Naive thymus-derived CD4-positive, alpha-beta T cell (primary cell): ENCODE measurements at regions of chr16 and their contacts with region 1.

Region 1: GRCh38 chr16:30957456-30958174 is at the start of gene SETD1A:
- DNase-seq: peak; percentile 94 to 99 (median 97)
- ATAC-seq: peak; percentile 93
- H3K4me3 ChIP-seq: peak within 1 kb of the TSS; percentile 100
- H3K4me3 Mint-ChIP-seq: peak within 1 kb of the TSS; percentile 81 to 97 (median 96)
- H3K27ac ChIP-seq: peak within 1 kb of the TSS; percentile 93
- H3K27ac Mint-ChIP-seq: peak within 1 kb of the TSS; percentile 97 to 100 (median 98)
- H3K4me1 ChIP-seq: peaks cover 16 to 22% of the 10 kb centered on the region in 2 donors
- H3K4me1 Mint-ChIP-seq: peaks cover 23 to 46% (median 29%) of the 10 kb centered on the region in 7 donors
- H3K27me3 ChIP-seq: no peaks in the 10 kb centered on the region
- H3K27me3 Mint-ChIP-seq: peaks cover 0 to 3% (median 0%) of the 10 kb centered on the region in 5 donors
- total RNA-seq, gene SETD1A: 27.0 to 47.2 (median 36.8) TPM

Region 2: GRCh38 chr16:30571695-30572600 is 385.7 kb before region 1 on chr16 and contains the start of gene ZNF688:
- CTCF ChIA-PET with region 1: no interaction called
- POLR2A ChIA-PET with region 1: no interaction called
- intact Hi-C with region 1: loop called in 1 of 2 experiments (anchors 1 kb)
- DNase-seq: peak; percentile 74 to 99 (median 97)
- ATAC-seq: peak; percentile 89
- H3K4me3 ChIP-seq: peak within 1 kb of the TSS; percentile 88
- H3K4me3 Mint-ChIP-seq: peak within 1 kb of the TSS; percentile 87 to 98 (median 90)
- H3K27ac ChIP-seq: peak within 1 kb of the TSS; percentile 94
- H3K27ac Mint-ChIP-seq: peak within 1 kb of the TSS; percentile 92 to 98 (median 95)
- H3K4me1 ChIP-seq: peaks cover 36 to 38% of the 10 kb centered on the region in 2 donors
- H3K4me1 Mint-ChIP-seq: peaks cover 17 to 51% (median 39%) of the 10 kb centered on the region in 7 donors
- H3K27me3 ChIP-seq: no peaks in the 10 kb centered on the region
- H3K27me3 Mint-ChIP-seq: no peaks in the 10 kb centered on the region
- total RNA-seq, gene ZNF688: 8.8 to 24.3 (median 16.3) TPM

Region 3: DNA sequence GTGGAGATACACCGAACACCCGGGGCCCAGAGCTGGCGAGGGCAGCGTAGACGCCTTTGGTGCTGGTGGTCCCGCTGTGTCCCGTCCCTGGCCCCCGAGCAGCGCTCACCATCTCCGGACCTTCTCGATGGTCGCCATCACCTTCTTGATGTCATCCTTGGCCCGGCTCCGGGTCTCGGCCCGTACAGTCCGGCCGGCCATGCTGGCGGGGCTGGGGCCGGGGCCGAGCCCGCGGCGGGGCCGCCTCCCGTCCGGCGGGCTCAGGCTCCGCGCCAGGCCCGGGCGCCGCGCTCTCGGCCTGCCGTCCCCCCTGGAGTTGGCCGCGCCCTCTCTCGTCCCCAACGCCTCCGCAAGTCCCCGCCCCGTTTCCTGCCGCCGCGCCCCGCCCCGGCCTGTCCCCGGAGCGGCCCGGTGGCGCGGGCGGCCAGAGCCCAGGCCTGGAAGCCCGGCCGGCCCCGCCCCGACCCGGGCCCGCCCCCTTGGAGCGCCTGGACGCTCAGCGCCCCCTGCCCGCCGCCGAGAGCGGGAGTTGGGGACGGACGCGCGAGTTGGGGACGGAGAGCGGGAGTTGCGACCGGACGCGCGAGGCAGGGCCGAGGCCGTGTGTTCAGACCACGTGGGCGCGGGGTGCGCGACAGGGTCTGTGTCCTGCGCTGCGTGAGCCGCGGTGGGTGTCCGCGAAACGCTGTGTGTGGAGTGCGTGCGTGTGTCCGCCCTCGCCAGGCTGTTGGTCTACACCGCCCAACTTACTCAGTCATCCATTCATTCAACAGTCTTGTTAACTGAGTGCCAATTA is 63.7 kb before region 1 on chr16 and contains the start of gene BCL7C:
- CTCF ChIA-PET with region 1: no interaction called
- POLR2A ChIA-PET with region 1: no interaction called
- intact Hi-C with region 1: loop called in 1 of 2 experiments (anchors 2 kb)
- DNase-seq: peak; percentile 48 to 96 (median 61)
- ATAC-seq: peak; percentile 85
- H3K4me3 ChIP-seq: peak within 1 kb of the TSS; percentile 82
- H3K4me3 Mint-ChIP-seq: peak within 1 kb of the TSS; percentile 84 to 96 (median 90)
- H3K27ac ChIP-seq: peak within 1 kb of the TSS; percentile 82
- H3K27ac Mint-ChIP-seq: peak within 1 kb of the TSS; percentile 80 to 94 (median 91)
- H3K4me1 ChIP-seq: peaks cover 25 to 34% of the 10 kb centered on the region in 2 donors
- H3K4me1 Mint-ChIP-seq: peaks cover 26 to 60% (median 48%) of the 10 kb centered on the region in 7 donors
- H3K27me3 ChIP-seq: no peaks in the 10 kb centered on the region
- H3K27me3 Mint-ChIP-seq: no peaks in the 10 kb centered on the region
- total RNA-seq, gene BCL7C: 17.2 to 23.7 (median 22.7) TPM

Region 4: DNA sequence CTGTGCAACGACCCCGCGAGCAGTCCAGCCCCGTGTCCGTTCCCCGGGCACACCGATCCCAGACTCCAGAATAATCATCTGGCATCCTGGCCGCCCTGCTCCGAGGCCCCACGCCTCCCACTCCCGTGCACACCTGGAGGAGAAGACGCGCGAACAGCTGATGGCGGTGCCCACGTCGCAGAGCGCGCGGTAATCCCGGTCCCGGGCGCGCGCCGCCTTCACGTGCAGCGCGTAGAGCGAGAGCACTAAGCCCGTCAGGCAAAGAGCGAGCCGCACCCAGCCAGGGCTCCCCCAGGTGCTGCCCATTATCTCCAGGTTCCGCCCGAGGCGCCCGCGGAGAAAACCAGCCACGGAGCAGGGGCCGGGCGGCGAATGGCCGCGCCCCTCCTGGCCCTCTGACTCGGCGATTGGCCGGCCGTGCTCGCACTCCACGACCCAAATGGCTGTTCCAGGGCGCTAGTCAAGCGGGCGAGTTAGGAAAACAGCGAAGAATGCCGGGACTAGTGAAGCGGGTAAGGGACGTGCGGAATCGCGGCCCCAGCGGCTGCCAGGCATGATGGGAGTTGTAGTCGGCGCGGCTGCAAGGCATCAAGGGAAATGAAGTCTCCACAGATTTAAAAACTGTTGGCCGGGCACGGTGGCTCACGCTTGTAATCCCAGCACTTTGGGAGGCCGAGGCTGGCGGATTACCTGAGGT is 137.0 kb after region 1 on chr16 and contains the start of gene VKORC1:
- CTCF ChIA-PET with region 1: no interaction called
- POLR2A ChIA-PET with region 1: interaction called, 3 read pairs
- intact Hi-C with region 1: loop called in 1 of 2 experiments (anchors 1 kb)
- DNase-seq: peak; percentile 66 to 89 (median 88)
- ATAC-seq: peak; percentile 93
- H3K4me3 ChIP-seq: peak within 1 kb of the TSS; percentile 99
- H3K4me3 Mint-ChIP-seq: peak within 1 kb of the TSS; percentile 92 to 99 (median 94)
- H3K27ac ChIP-seq: peak within 1 kb of the TSS; percentile 85
- H3K27ac Mint-ChIP-seq: peak within 1 kb of the TSS; percentile 67 to 95 (median 91)
- H3K4me1 ChIP-seq: peaks cover 14 to 18% of the 10 kb centered on the region in 2 donors
- H3K4me1 Mint-ChIP-seq: peaks cover 14 to 42% (median 29%) of the 10 kb centered on the region in 7 donors
- H3K27me3 ChIP-seq: no peaks in the 10 kb centered on the region
- H3K27me3 Mint-ChIP-seq: no peaks in the 10 kb centered on the region
- total RNA-seq, gene VKORC1: 29.5 to 69.3 (median 35.6) TPM

Region 5: GRCh38 chr16:31179747-31180459 is 222.3 kb after region 1 on chr16 and contains the start of gene FUS:
- CTCF ChIA-PET with region 1: no interaction called
- POLR2A ChIA-PET with region 1: interaction called, 3 read pairs
- intact Hi-C with region 1: loop called in 1 of 2 experiments (anchors 1 kb)
- DNase-seq: peak; percentile 88 to 97 (median 95)
- ATAC-seq: peak; percentile 87
- H3K4me3 ChIP-seq: peak within 1 kb of the TSS; percentile 76
- H3K4me3 Mint-ChIP-seq: peak within 1 kb of the TSS; percentile 92 to 99 (median 96)
- H3K27ac ChIP-seq: peak within 1 kb of the TSS; percentile 90
- H3K27ac Mint-ChIP-seq: peak within 1 kb of the TSS; percentile 96 to 100 (median 99)
- H3K4me1 ChIP-seq: peaks cover 56% of the 10 kb centered on the region in 2 donors
- H3K4me1 Mint-ChIP-seq: peaks cover 49 to 72% (median 56%) of the 10 kb centered on the region in 7 donors
- H3K27me3 ChIP-seq: no peaks in the 10 kb centered on the region
- H3K27me3 Mint-ChIP-seq: peaks cover 0 to 3% (median 0%) of the 10 kb centered on the region in 5 donors
- total RNA-seq, gene FUS: 597 to 956 (median 714) TPM

Region 6: GRCh38 chr16:31191697-31192428 is 234.2 kb after region 1 on chr16:
- CTCF ChIA-PET with region 1: no interaction called
- POLR2A ChIA-PET with region 1: no interaction called
- intact Hi-C with region 1: no loop called
- DNase-seq: no peak
- ATAC-seq: no peak
- H3K4me3 ChIP-seq: no peak overlapping the region
- H3K4me3 Mint-ChIP-seq: peak overlapping the region in 2 of 10 donors; percentile 8 to 40
- H3K27ac ChIP-seq: no peak overlapping the region
- H3K27ac Mint-ChIP-seq: peak overlapping the region in 8 of 9 donors; percentile 4 to 79 (median 32)
- H3K4me1 ChIP-seq: peaks cover 8 to 21% of the 10 kb centered on the region in 2 donors
- H3K4me1 Mint-ChIP-seq: peaks cover 48 to 70% (median 66%) of the 10 kb centered on the region in 7 donors
- H3K27me3 ChIP-seq: no peaks in the 10 kb centered on the region
- H3K27me3 Mint-ChIP-seq: no peaks in the 10 kb centered on the region